ENCODE measurements at regions of chr12 and their contacts with region 1.

Region 1: GRCh38 chr12:14769969-14770495 is 33.2 kb downstream of the WBP11 start:
- DNase-seq: peak; percentile 85 to 91 (median 89)
- H3K4me3 ChIP-seq: peak overlapping the region; percentile 95
- H3K4me3 Mint-ChIP-seq: peak overlapping the region; percentile 94 to 100 (median 98)
- H3K27ac ChIP-seq: peak overlapping the region; percentile 99
- H3K27ac Mint-ChIP-seq: peak overlapping the region; percentile 99 to 100 (median 100)
- H3K4me1 ChIP-seq: peaks cover 43% of the 10 kb centered on the region
- H3K4me1 Mint-ChIP-seq: peaks cover 59 to 80% (median 68%) of the 10 kb centered on the region in 3 donors
- H3K27me3 ChIP-seq: no peaks in the 10 kb centered on the region
- H3K27me3 Mint-ChIP-seq: peaks cover 0 to 15% of the 10 kb centered on the region in 2 donors

Region 2: GRCh38 chr12:14403711-14404196 is 366.3 kb before region 1 on chr12:
- CTCF ChIA-PET with region 1: no interaction called
- POLR2A ChIA-PET with region 1: interaction called, 12 read pairs
- DNase-seq: peak in 3 of 5 donors; percentile 60 to 69 (median 61)
- H3K4me3 ChIP-seq: no peak overlapping the region
- H3K4me3 Mint-ChIP-seq: peak overlapping the region; percentile 70 to 86 (median 78)
- H3K27ac ChIP-seq: peak overlapping the region; percentile 13
- H3K27ac Mint-ChIP-seq: peak overlapping the region; percentile 87 to 98 (median 94)
- H3K4me1 ChIP-seq: peaks cover 94% of the 10 kb centered on the region
- H3K4me1 Mint-ChIP-seq: peaks cover 75 to 91% (median 86%) of the 10 kb centered on the region in 3 donors
- H3K27me3 ChIP-seq: no peaks in the 10 kb centered on the region
- H3K27me3 Mint-ChIP-seq: no peaks in the 10 kb centered on the region

Region 3: GRCh38 chr12:14782756-14783155 is 12.7 kb after region 1 on chr12:
- CTCF ChIA-PET with region 1: interaction called, 11 read pairs
- POLR2A ChIA-PET with region 1: interaction called, 12 read pairs
- DNase-seq: no peak
- H3K4me3 ChIP-seq: no peak overlapping the region
- H3K4me3 Mint-ChIP-seq: no peak overlapping the region
- H3K27ac ChIP-seq: no peak overlapping the region
- H3K27ac Mint-ChIP-seq: peak overlapping the region in 1 of 8 donors; percentile 58
- H3K4me1 ChIP-seq: no peaks in the 10 kb centered on the region
- H3K4me1 Mint-ChIP-seq: peaks cover 2 to 10% (median 6%) of the 10 kb centered on the region in 3 donors
- H3K27me3 ChIP-seq: no peaks in the 10 kb centered on the region
- H3K27me3 Mint-ChIP-seq: no peaks in the 10 kb centered on the region

Region 4: DNA sequence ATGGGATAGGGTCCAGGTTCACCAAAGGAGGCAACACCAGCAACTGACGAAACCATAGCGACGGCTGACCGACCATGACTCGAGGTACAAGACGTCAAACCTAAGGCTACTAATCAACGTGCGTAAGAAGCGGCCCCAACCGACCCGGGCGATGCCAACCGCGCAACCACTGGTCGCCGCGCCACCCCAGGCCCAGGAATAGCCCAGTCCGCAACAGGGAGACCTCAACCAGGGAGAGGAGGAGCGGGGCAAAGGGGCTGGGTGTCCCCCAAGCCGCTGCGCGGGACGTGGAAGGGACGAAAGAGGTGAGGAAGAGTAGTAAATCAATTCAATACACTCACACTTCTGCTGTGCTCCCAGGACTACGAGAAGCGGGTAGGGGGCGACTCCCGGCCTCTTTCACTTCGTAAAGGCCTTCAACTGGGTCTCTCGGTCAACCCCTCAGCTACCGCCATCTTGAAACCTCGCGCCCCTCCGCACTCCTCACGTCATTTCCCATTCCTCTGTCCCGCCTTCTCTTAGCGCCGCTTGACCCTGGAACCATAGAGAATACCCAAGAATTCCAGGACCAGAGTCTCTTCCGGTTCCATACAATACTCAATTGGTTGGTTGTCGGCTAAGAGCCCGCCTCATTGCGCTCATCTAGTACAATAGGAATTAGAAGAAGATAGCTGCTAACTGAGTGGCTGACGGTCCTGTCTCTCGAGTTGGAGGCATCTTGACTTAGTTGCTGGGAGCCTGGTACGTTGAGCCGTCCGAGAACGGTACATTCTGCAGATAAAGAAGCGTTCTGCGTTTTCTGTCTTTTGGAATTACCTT is 33.2 kb after region 1 on chr12 and contains the starts of genes C12orf60 and WBP11:
- CTCF ChIA-PET with region 1: interaction called, 45 read pairs
- POLR2A ChIA-PET with region 1: interaction called, 128 read pairs
- DNase-seq: peak; percentile 78 to 94 (median 91)
- H3K4me3 ChIP-seq: peak within 1 kb of the TSS; percentile 81
- H3K4me3 Mint-ChIP-seq: no peak within 1 kb of the TSS
- H3K27ac ChIP-seq: peak within 1 kb of the TSS; percentile 96
- H3K27ac Mint-ChIP-seq: no peak within 1 kb of the TSS
- H3K4me1 ChIP-seq: peaks cover 36% of the 10 kb centered on the region
- H3K4me1 Mint-ChIP-seq: peaks cover 0 to 28% (median 19%) of the 10 kb centered on the region in 3 donors
- H3K27me3 ChIP-seq: no peaks in the 10 kb centered on the region
- H3K27me3 Mint-ChIP-seq: no peaks in the 10 kb centered on the region
- total RNA-seq, gene C12orf60: 3.1 TPM
- total RNA-seq, gene WBP11: 149 to 156 TPM

Region 5: DNA sequence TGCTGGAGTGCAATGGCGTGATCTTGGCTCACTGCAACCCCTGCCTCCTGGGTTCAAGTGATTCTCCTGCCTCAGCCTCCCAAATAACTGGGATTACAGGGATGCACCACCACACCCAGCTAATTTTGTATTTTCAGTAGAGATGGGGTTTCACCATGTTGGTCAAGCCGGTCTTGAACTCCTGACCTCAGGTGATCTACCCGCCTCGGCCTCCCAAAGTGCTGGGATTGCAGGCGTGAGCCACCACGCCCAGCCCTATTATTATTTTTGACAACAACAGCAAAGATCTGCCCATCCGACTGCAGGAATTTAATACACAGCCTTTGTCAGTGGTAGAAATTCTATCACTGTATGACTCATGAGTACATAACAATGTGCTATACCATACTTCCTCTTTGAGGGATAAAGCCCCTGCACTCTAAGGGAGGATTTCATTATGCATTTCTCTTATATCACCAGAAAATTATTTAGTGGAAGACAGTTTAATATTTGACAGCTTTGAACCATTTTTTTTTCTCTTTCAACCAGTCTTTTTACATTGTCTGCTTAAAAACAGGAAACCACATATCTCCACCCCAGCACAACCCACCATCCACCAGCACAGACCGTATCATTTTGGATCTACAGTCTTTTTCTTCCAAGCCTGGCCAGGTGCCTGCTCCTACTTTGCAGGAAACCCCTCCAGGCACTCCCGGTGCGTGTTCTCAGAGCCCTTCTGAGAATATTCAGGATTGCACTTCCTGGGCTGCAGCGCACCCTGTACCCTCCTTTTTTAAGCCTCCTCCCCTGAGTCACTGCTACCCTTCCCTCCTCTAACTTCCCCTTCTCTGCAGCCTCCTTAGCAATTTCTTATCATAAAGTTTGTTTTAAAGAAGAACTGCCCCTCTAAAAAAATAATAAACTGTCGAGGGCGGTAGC is 190.8 kb after region 1 on chr12:
- CTCF ChIA-PET with region 1: interaction called, 11 read pairs
- POLR2A ChIA-PET with region 1: interaction called, 13 read pairs
- DNase-seq: peak; percentile 33 to 81 (median 72)
- H3K4me3 ChIP-seq: peak overlapping the region; percentile 94
- H3K4me3 Mint-ChIP-seq: peak overlapping the region; percentile 96 to 100 (median 98)
- H3K27ac ChIP-seq: peak overlapping the region; percentile 85
- H3K27ac Mint-ChIP-seq: peak overlapping the region; percentile 92 to 100 (median 99)
- H3K4me1 ChIP-seq: peaks cover 57% of the 10 kb centered on the region
- H3K4me1 Mint-ChIP-seq: peaks cover 61 to 80% (median 66%) of the 10 kb centered on the region in 3 donors
- H3K27me3 ChIP-seq: no peaks in the 10 kb centered on the region
- H3K27me3 Mint-ChIP-seq: peaks cover 0 to 1% of the 10 kb centered on the region in 2 donors

Measured in CD8-positive, alpha-beta memory T cell (primary cell).